ENCODE measurements at regions of chr7 and their contacts with region 1.

Region 1: DNA sequence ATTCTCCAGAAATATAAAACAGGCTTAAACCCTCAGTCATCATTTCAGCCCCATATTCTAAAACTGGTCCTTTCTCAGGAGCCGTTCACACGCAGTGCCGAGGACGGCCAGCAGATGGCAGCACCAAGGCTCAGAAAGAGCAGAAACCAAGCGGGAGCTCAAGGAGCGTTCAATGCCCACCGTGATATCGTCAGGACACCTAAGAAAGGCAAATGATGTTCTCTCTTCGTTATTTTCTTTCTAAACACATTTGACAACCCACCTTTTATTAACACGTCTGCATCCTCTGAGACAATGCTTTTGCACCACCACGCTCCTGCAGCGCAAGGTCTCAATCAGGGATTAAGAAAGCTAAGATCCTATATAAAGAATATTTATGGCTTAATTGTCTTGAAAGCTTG is 45.7 kb upstream of the RBM33 start:
- DNase-seq: no peak
- H3K4me3 ChIP-seq: no peak overlapping the region
- CTCF ChIP-seq: peak; percentile 90

Region 2: DNA sequence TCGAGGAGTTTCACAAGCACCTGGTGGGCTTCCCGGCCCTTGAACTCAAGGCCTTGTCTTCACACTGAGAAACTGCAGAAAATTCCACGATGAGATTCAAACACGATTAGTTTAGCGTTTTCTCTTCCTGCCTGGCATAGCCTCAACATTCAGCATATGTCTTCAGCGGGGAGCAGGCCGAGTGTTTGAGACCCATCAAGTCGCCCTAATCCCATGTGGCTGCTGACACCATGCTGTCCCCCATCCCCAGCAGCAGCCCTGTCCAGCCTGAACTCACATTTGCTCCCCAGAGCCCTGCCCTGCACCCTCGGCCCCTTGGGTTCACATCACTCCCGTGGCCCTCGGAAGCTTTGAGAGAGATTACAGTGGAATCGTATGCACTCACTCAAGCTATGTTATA is 10.4 kb after region 1 on chr7:
- CTCF ChIA-PET with region 1: interaction called, 28 read pairs
- POLR2A ChIA-PET with region 1: no interaction called
- DNase-seq: no peak
- H3K4me3 ChIP-seq: no peak overlapping the region
- CTCF ChIP-seq: no peak

Region 3: GRCh38 chr7:155637155-155637554 is 38.3 kb after region 1 on chr7:
- CTCF ChIA-PET with region 1: interaction called, 11 read pairs
- POLR2A ChIA-PET with region 1: no interaction called
- DNase-seq: no peak
- H3K4me3 ChIP-seq: no peak overlapping the region
- CTCF ChIP-seq: no peak

Region 4: GRCh38 chr7:155715111-155715805 is 116.4 kb after region 1 on chr7:
- CTCF ChIA-PET with region 1: interaction called, 11 read pairs
- POLR2A ChIA-PET with region 1: no interaction called
- DNase-seq: no peak
- H3K4me3 ChIP-seq: no peak overlapping the region
- CTCF ChIP-seq: no peak

Region 5: GRCh38 chr7:155728116-155728515 is 129.3 kb after region 1 on chr7:
- CTCF ChIA-PET with region 1: interaction called, 410 read pairs
- POLR2A ChIA-PET with region 1: no interaction called
- DNase-seq: no peak
- H3K4me3 ChIP-seq: no peak overlapping the region
- CTCF ChIP-seq: no peak

Region 6: GRCh38 chr7:155762655-155763054 is 163.8 kb after region 1 on chr7:
- CTCF ChIA-PET with region 1: interaction called, 189 read pairs
- POLR2A ChIA-PET with region 1: no interaction called
- DNase-seq: no peak
- H3K4me3 ChIP-seq: no peak overlapping the region
- CTCF ChIP-seq: no peak

Region 7: GRCh38 chr7:155778349-155778748 is 179.5 kb after region 1 on chr7:
- CTCF ChIA-PET with region 1: interaction called, 189 read pairs
- POLR2A ChIA-PET with region 1: no interaction called
- DNase-seq: no peak
- H3K4me3 ChIP-seq: no peak overlapping the region
- CTCF ChIP-seq: no peak